ENCODE measurements at regions of chr5 and their contacts with region 1.

Region 1: DNA sequence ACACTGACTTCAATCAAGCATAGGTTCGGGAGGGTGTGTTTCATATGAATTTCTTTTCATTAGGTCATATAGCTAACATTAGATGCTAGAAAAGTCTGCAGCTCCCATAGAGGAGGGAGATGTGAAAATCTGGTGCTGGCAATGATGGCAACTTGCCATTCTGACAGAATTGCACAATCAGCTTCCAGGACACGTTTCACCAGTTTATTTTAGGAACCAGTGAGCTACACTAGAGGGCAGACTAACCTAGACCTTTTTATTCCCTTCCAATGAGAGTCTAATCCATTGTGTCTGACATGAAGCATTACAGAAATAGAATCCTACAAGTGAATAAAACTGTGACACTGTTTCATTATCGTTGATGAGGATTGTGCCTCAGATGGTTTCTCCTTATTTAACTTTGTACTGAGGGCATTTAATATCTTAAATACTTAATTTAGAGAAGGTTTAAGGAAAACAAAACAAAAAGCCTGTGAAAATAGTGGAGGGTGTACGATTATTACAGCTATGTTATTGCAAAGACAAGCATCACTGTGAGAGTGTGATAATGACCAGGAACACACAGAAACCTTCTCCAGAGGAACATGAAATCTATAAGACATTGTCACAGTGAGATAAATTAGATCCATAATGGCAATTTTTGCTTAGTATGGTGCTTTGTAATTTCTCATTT is 363.3 kb upstream of the RPS23 start:
- DNase-seq: peak; percentile 41
- ATAC-seq: peak; percentile 99

Region 2: GRCh38 chr5:82793808-82794419 is 152.4 kb after region 1 on chr5:
- intact Hi-C with region 1: loop called (anchors 10 kb)
- DNase-seq: no peak
- ATAC-seq: no peak

Region 3: DNA sequence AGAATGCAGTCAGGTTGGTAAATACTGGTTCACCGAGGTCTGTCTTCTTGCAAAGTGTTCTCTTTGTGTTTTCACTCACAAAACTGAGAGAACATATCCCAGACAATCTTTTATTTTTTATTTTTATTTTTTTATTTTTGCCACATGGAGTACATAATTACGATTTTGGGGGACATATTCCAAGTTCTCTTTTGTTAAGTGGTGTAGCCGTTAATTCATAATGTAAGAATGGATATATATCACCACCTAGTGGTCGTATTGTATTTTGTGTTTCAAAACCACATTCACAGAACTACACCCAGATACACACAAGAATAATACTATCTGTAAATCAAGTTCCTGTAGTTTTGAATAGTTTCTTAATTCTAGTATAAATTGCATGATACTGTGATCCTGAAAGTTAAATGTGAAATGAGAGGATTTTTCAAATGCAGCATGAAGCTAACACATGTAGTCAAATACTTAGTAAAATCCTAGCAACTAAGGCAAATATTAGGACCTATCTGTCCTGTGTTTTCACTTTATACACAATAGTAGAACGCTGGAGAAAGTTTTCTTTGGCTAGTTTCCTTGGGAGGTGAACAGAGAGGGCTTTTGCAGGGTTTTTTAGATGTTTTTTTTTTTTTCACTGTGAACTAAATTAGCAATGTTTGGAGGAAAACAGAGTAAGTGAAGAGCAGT is 922.7 kb after region 1 on chr5:
- intact Hi-C with region 1: loop called (anchors 10 kb)
- DNase-seq: no peak
- ATAC-seq: peak; percentile 64